ENCODE measurements at regions of chr1 and their contacts with region 1.

Region 1: DNA sequence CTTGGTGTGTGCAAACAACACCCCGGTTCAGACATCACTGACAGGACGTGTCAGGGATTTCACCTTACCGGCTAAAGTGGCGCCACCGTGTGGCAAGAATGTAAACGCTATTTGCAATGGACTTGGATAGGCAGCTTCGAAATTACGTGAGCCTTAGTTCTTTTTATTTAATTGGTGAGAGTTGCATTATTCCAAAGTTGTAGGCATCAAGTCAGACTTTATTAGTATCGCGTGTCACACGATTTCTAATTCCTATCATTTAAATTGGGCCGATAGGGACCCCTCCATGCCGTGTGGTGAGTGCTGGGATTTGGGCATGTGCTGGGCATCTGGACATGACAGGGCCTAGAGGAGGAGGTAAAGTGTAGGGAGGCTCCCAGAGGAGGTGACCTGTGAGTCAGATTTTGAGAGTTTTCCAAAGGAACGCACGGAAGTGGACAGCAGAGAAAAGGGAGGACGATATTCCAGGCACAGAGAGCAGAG is 14.5 kb upstream of the CPT2 start:
- DNase-seq: peak; percentile 91 to 92
- H3K4me3 ChIP-seq: no peak overlapping the region
- H3K27ac ChIP-seq: peak overlapping the region; percentile 85 to 88
- H3K4me1 ChIP-seq: peaks cover 4 to 16% of the 10 kb centered on the region in 2 donors
- H3K27me3 ChIP-seq: no peaks in the 10 kb centered on the region
- CTCF ChIP-seq: peak; percentile 79 to 87 (median 85)
- POLR2A ChIP-seq: no peak

Region 2: DNA sequence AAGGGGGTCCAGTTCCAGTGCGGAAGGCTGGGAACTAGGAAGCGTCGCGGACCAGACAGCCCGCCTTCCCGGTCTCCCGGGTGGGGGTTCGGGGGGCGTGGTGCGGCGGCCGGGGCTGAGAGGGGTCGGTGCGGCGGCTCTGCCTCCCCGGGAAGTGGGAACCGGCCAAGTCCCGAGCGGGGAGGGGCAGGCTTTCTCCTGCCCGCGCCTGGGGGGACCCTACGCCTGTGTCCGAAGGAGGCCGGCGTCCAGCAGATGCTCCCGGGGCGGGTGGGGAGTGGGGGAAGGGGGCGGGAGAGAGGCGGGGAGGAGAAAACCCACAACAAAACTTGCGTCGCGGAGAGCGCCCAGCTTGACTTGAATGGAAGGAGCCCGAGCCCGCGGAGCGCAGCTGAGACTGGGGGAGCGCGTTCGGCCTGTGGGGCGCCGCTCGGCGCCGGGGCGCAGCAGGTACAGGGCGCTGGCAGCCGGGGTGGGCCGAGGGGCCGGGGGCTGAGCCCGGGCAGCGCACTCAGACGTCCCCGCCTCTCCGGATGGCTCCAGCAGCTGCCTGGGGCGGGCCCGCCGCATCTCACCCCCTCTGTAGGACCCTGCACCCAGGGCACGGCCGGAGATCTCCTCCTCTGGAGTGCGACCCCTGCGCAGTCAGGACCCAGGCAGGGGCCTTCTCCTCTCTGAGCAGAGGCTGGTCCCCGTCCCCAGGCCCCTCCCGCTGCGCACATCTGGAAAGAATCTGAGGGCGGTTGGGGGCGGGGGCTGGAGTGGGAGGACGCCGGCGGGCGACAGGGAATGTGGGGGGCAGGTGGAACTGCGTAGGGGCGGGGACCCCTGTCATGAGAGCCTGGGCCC is 120.1 kb before region 1 on chr1 and contains the start of gene PODN:
- intact Hi-C with region 1: loop called (anchors 10 kb)
- DNase-seq: peak; percentile 63 to 80
- H3K4me3 ChIP-seq: peak within 1 kb of the TSS; percentile 67 to 90
- H3K27ac ChIP-seq: peak within 1 kb of the TSS; percentile 84 to 88
- H3K4me1 ChIP-seq: peaks cover 1 to 3% of the 10 kb centered on the region in 2 donors
- H3K27me3 ChIP-seq: no peaks in the 10 kb centered on the region
- CTCF ChIP-seq: no peak
- POLR2A ChIP-seq: peak in 1 of 2 donors; percentile 10
- total RNA-seq, gene PODN: 20.9 to 100 (median 71.8) TPM